PC-9 (cell line): ENCODE measurements at regions of chr16 and their contacts with region 1.

Region 1: DNA sequence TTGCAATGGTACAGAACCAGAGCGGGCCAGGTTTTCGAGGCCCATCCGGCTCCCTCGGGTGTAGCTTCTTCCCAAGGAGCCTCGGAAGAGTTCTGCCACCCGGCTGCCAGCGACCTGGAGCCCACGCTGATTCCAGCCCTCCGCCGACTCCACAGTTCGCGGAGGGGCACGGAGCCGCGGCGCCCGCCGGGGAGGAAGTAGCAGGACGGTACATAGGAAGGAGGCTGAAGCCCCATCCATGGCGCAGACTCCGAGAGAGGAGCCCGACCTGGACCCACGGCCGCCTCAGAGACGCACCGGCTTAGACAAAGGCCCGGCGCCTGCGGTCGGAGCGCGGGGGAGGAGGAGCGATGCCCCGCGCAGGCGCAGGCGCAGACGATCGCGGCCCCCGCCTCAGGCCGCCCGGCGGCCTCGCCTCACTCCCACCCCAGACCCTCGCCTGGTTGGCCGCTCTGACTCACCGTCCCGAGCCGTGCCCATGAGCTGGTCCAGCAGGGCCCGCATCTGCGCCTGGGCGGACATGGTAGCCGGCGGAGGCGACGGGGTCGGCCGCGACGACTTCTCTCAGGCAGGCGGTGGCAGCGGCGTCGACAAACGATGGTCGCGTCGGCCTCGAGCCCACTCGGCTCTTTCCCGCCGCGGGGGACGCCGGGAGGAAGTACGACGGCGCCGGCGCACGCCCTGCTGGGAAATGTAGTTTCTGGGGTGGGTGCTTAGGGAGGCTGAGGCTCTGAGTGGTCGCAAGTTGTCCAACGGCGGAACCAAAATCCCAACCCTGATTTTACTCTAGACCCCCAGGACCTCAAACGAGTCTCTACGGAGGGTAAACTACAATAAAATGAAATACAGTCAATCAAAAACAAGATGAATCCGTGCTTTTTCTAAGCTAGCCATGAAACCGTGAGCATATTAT is at the start of gene LUC7L:
- DNase-seq: peak; percentile 69 to 91
- H3K4me3 ChIP-seq: peak within 1 kb of the TSS; percentile 93
- H3K27ac ChIP-seq: peak within 1 kb of the TSS; percentile 75
- H3K4me1 ChIP-seq: peaks cover 15% of the 10 kb centered on the region
- H3K27me3 ChIP-seq: no peaks in the 10 kb centered on the region
- CTCF ChIP-seq: no peak
- total RNA-seq, gene LUC7L: 64.3 and 66.9 TPM in 2 replicates

Region 2: DNA sequence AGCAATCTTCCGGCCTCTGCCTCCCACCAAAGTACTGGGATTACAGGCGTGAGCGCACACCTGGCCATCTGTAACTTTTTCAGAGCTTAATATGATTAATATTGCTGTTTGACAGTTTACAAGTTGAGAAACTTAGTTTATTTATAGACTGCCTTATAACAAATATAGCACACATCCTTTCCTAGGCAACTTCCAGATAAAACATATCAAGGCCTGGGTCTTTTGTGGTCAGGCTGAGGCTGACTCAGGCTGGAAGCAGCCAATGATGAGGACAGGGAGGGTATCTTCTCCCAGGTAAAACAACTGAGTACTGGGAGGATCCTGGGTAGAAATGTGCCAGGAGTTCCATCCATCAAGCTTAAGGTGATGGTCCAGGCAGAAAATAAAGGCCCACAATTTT is 16.1 kb before region 1 on chr16:
- CTCF ChIA-PET with region 1: interaction called, 3 read pairs
- POLR2A ChIA-PET with region 1: interaction called, 11 read pairs
- intact Hi-C with region 1: no loop called
- DNase-seq: no peak
- H3K4me3 ChIP-seq: no peak overlapping the region
- H3K27ac ChIP-seq: no peak overlapping the region
- H3K4me1 ChIP-seq: no peaks in the 10 kb centered on the region
- H3K27me3 ChIP-seq: no peaks in the 10 kb centered on the region
- CTCF ChIP-seq: no peak